Common myeloid progenitor, CD34-positive (primary cell): ENCODE measurements at regions of chr7 and their contacts with region 1.

Region 1: GRCh38 chr7:129218514-129219062 is 6.2 kb upstream of the AHCYL2 start:
- DNase-seq: peak; percentile 67 to 77 (median 72)
- H3K4me3 ChIP-seq: no peak overlapping the region
- H3K27ac ChIP-seq: no peak overlapping the region
- H3K4me1 ChIP-seq: peaks cover 8 to 14% (median 9%) of the 10 kb centered on the region in 4 experiments
- H3K27me3 ChIP-seq: no peaks in the 10 kb centered on the region

Region 2: DNA sequence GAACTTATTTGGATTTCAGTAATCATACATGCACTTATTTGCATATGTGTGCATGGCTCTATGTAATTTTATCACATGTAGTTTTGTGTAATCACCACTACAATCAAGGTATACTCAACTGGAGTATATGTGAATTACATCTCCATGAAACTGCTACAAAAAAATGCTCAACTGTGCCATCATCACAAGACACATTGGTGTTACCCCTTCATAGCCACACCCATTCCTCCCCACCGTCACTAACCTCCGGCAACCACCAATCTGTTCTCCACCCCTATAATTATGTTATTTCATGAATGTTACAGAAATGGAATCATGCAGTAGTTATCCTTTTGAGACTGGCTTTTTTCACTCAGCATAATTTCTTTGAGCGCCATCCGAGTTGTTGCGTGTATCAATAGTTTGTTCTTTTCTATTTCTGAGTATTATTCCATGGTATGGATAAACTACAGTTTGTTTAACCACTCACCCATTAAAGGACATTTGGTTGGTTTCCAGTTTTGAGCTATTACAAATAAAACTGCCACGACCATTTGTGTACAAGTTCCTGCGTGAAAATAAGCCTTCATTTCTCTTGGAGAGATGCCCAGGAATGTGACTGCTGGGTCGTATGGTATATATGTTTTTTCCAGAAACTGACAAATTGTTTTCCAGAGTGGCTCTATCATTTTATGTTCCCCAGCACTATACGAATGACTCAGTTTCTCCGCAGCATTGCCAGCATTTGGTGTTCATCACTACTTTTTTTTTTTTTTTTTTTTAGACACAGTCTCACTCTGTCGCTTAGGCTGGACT is 41.5 kb before region 1 on chr7:
- CTCF ChIA-PET with region 1: no interaction called
- POLR2A ChIA-PET with region 1: no interaction called
- DNase-seq: peak in 2 of 3 donors; percentile 24 to 50
- H3K4me3 ChIP-seq: no peak overlapping the region
- H3K27ac ChIP-seq: no peak overlapping the region
- H3K4me1 ChIP-seq: no peaks in the 10 kb centered on the region
- H3K27me3 ChIP-seq: no peaks in the 10 kb centered on the region

Region 3: GRCh38 chr7:129231666-129232065 is 13.1 kb after region 1 on chr7:
- CTCF ChIA-PET with region 1: interaction called, 10 read pairs
- POLR2A ChIA-PET with region 1: no interaction called
- DNase-seq: no peak
- H3K4me3 ChIP-seq: no peak overlapping the region
- H3K27ac ChIP-seq: no peak overlapping the region
- H3K4me1 ChIP-seq: peaks cover 0 to 4% (median 0%) of the 10 kb centered on the region in 4 experiments
- H3K27me3 ChIP-seq: no peaks in the 10 kb centered on the region

Region 4: GRCh38 chr7:129258649-129259389 is 40.2 kb after region 1 on chr7:
- CTCF ChIA-PET with region 1: interaction called, 31 read pairs
- POLR2A ChIA-PET with region 1: no interaction called
- DNase-seq: peak in 1 of 3 donors; percentile 29
- H3K4me3 ChIP-seq: no peak overlapping the region
- H3K27ac ChIP-seq: no peak overlapping the region
- H3K4me1 ChIP-seq: peaks cover 7 to 24% (median 20%) of the 10 kb centered on the region in 4 experiments
- H3K27me3 ChIP-seq: no peaks in the 10 kb centered on the region

Region 5: GRCh38 chr7:129298268-129298893 is 79.8 kb after region 1 on chr7:
- CTCF ChIA-PET with region 1: interaction called, 110 read pairs
- POLR2A ChIA-PET with region 1: interaction called, 4 read pairs
- DNase-seq: peak; percentile 46 to 67 (median 60)
- H3K4me3 ChIP-seq: no peak overlapping the region
- H3K27ac ChIP-seq: no peak overlapping the region
- H3K4me1 ChIP-seq: no peaks in the 10 kb centered on the region
- H3K27me3 ChIP-seq: no peaks in the 10 kb centered on the region